PC-9 (cell line): ENCODE measurements at regions of chr2 and their contacts with region 1.

Region 1: DNA sequence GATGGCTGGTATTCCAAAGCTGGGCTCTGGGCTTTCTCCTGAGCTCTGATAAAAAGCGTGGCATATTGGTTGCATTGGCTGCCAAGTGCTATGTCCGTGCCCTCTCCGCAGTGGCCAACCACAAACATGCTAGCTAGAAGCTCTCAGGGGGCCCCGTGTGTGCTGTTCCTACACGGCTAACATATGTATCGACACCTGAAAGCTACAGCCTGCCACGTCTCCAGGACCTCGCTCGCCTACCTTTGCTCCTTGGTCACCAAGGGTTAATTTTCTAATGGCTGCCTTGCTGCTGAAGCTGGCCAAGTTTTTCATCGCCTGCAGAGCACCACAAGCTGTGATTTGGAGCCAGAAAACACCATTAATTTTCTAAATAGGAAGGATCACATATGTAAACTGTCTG is 888.4 kb downstream of the BCL11A start:
- DNase-seq: no peak
- H3K4me3 ChIP-seq: no peak overlapping the region
- H3K27ac ChIP-seq: no peak overlapping the region
- H3K4me1 ChIP-seq: no peaks in the 10 kb centered on the region
- H3K27me3 ChIP-seq: peaks cover 30% of the 10 kb centered on the region
- CTCF ChIP-seq: no peak

Region 2: GRCh38 chr2:59630789-59631188 is 34.2 kb before region 1 on chr2:
- CTCF ChIA-PET with region 1: no interaction called
- POLR2A ChIA-PET with region 1: no interaction called
- intact Hi-C with region 1: no loop called
- DNase-seq: no peak
- H3K4me3 ChIP-seq: no peak overlapping the region
- H3K27ac ChIP-seq: no peak overlapping the region
- H3K4me1 ChIP-seq: no peaks in the 10 kb centered on the region
- H3K27me3 ChIP-seq: no peaks in the 10 kb centered on the region
- CTCF ChIP-seq: no peak

Region 3: DNA sequence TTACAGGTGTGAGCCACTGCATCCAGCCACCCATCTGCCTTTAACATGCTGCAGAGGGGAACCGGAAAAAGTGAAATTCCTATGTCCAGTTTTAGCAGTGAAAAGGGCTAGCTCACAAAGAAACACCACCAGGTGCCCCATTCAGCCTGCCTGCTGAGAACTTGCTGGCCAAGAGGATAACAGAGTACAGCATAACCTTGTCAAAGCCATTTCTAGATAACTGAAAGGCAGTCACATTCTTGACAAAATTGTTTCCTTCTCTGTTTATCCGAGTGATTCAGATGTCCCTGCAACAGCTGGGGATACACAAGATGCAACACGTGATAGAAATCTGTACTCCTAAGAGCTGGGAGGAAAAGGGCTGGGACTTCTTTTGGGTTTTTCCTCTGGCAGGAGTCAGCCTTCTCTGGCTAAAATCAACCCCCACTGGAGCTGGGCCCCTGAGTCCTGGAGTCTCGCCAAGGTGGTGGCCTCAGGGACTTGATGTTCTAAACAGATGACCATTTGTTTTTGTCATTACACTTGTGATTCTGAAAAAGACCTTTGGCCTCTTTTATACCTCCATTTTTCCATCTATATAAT is 383.0 kb after region 1 on chr2:
- CTCF ChIA-PET with region 1: no interaction called
- POLR2A ChIA-PET with region 1: no interaction called
- intact Hi-C with region 1: no loop called
- DNase-seq: no peak
- H3K4me3 ChIP-seq: no peak overlapping the region
- H3K27ac ChIP-seq: no peak overlapping the region
- H3K4me1 ChIP-seq: no peaks in the 10 kb centered on the region
- H3K27me3 ChIP-seq: peaks cover 24% of the 10 kb centered on the region
- CTCF ChIP-seq: no peak

Region 4: DNA sequence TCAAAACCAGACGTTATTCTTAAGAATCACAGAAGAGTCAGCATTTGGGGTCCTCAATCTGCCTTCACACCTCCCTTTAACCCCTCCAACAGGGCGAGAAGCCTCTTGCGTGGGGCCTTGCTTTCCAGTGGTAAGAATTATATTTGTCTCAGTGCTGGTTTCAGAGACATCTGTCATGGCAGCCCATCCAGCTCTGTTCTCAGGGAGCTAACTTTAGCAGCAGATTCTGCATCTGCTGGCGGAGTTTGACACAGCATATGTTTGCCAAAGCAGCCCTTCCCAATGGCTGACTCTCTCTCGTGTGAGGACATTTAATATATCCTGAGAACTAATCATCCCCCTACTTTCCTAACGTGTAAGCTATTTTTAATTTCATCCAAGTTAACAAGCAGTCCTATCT is 979.9 kb after region 1 on chr2:
- CTCF ChIA-PET with region 1: no interaction called
- POLR2A ChIA-PET with region 1: interaction called, 24 read pairs
- intact Hi-C with region 1: no loop called
- DNase-seq: no peak
- H3K4me3 ChIP-seq: no peak overlapping the region
- H3K27ac ChIP-seq: no peak overlapping the region
- H3K4me1 ChIP-seq: no peaks in the 10 kb centered on the region
- H3K27me3 ChIP-seq: peaks cover 94% of the 10 kb centered on the region
- CTCF ChIP-seq: no peak